Sciatic nerve (tissue), 2 donors: ENCODE measurements at regions of chr13 and their contacts with region 1.

Region 1: DNA sequence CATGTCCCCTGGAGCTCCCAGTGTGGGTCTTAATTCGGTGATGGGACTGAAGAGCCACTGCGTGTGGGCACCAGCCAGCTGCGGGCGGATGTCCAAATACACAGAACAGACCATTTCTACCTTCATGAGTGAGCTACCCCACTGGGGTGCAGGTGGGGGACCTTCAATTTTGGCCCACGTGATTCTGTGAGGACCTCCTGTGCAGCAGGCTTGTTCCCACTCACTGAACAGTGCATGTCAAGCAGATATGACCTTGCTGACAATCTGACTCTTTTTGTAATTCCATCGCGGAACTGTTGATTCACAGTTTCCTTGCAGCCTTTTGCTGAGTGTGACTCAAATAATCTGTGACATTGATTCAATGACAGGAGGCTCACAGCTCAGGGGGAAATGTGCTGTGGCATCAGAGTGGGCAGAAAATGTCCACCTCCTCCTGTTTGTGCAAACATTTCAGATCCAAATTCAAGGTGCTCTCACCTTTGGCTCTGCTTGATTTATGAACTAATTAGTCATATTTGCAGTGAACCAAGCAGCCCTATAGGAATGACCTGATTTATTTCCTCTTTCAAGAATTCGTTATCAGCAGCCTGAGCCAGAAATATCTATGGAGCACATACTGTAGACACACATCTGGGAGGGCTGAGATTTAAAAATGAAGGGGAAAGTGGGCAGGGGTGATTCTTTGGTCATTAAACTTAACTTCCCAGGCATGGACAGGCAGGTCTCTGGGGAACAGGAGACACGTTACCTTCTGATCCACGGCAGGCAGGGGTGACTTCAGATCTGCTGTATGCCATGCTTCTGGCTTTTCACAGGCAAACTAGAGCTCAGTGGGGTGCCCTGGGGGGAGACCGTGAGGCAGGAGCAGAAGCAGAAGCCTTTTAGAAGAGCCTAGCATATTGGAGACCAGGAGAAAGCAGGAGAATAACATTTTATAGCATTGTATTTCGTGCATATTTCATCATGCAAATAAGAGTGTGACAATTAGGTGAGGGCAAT is 170.0 kb upstream of the KL start:
- DNase-seq: no peak
- ATAC-seq: no peak

Region 2: DNA sequence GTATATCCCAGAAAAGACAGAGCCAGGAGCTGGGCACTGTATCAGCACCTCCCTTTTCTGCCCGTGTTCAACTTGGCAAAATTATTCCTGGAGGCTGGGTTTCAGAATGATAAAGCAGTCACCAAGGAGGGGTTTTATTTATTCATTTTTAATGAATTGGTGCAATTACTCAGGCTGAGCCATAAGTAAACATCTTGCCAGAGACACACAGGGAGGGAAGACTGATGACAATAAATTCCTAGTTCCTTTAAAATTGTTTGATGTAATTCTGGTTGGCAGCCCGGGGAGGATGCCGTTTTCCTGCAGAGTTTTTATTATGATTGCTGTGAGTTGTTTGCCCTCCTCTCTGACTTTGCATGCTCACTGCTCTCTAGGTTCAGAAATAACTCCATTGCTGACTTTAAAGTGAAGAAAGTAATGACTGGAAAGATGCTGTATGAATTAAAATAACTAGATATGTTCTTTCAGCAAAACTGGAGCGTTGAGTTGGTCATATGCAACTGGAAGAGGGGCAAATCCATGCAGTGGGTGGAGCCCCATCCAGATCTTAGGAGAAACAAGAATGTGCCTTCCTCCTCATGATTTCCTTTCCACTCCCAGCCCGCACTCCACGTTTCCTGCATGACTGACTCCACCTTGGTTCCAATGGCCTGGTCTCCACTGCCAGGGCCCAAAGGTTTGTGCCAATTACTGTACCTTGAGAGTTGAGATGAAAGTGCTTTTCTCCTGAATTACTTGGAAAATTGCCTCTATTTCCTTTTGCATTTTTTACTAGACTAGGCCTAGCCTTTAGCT is 1153.8 kb after region 1 on chr13:
- intact Hi-C with region 1: loop called (anchors 5 kb)
- DNase-seq: no peak
- ATAC-seq: no peak